ENCODE measurements at regions of chr3 and their contacts with region 1.

Region 1: DNA sequence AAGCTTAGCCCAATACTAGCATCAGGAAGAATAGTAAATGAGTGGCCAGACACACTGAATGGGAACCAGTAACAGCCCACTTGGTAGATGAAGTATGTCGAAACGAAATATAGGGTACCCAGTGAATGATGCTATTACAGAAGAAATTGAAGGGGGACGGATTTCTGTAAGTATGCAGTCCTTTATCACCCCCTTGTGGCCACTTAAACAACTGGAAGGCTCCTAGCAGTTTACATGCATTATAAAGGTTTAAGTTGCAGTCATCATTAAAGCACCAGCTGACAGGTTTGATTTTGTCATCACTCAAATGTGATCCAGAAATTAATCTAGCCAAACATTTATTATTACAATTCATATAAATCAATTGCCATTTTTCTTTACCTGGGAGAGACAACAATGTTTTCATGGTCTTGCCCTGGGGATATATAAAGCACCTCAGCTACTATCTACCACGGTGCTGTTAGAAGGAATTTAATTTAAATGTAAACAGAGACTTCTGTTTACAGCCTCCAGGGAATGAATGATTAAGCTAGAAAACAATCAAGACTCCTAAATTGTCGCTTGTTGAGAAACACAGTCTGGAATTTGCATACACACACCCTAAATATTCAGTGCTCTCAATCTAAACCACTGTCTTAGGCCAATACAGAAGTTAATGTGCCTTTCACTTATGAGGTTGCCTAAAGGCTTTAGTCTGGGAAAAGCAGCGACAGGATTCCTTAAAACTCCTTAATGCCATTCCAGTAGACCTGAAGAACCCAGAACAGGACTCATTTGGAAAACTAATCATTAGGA is 7.8 kb downstream of the EIF1B start:
- DNase-seq: peak in 2 of 5 donors; percentile 19 to 30
- ATAC-seq: no peak
- H3K4me3 ChIP-seq: no peak overlapping the region
- H3K27ac ChIP-seq: no peak overlapping the region
- H3K4me1 ChIP-seq: peaks cover 0 to 27% (median 15%) of the 10 kb centered on the region in 12 donors
- H3K27me3 ChIP-seq: no peaks in the 10 kb centered on the region
- CTCF ChIP-seq: peak; percentile 67 to 89 (median 82)
- POLR2A ChIP-seq: no peak

Region 2: DNA sequence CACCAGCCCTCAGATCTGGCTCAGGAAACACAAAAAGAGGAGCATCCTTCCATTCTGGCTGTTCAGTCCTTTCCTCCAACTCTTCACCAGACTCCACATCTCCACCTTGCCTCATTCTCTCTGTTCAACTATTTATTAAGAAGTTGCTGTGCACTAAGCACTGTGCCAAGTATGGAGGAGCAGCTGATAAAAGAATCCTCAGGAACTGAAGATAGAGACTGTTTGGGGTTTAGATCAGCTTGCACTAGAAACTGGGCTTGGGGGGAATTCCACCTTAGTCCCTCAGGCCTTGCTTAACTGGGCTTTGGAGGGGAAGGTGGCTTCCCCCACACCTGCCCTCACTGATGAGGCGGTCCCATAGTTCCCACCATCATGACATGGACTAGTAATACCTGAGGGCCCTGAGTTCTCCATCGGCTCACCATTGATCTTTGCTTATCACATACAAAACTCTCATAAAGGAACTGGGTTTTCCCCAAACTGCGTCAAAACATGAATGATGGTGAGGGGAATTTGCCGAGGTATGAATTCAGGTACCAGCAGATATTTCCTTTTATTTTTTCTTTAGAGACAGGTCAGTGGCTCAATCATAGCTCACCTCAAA is 989.4 kb before region 1 on chr3:
- intact Hi-C with region 1: no loop called
- DNase-seq: no peak
- ATAC-seq: no peak
- H3K4me3 ChIP-seq: no peak overlapping the region
- H3K27ac ChIP-seq: no peak overlapping the region
- H3K4me1 ChIP-seq: no peaks in the 10 kb centered on the region
- H3K27me3 ChIP-seq: peaks cover 0 to 7% (median 0%) of the 10 kb centered on the region in 9 donors
- CTCF ChIP-seq: no peak
- POLR2A ChIP-seq: no peak

Region 3: DNA sequence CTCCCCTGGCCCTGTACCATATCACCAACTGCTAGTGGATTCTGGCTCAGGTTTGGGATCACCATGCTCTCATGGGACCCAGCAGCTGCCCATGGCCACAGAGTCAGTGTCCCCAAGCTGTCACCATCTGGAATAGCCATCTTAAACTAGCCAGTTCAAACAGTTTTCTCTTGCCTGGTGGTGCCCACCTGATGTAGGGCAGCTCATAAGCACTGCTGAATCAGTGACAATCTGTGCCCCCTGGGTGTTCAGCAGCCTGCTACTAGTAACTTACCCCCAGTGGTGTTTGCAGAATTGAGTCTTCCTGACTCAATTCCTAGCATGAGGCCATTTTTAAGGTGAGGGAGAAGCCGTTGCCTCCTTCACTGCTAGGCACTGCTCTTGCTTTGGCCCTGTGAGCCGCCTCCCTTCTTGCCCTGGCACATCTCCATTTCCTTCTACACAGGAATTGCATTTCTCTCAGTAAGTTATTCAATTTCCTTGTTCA is 902.8 kb before region 1 on chr3:
- intact Hi-C with region 1: loop called in 1 of 10 experiments (anchors 10 kb)
- DNase-seq: no peak
- ATAC-seq: peak; percentile 41 to 73 (median 66)
- H3K4me3 ChIP-seq: no peak overlapping the region
- H3K27ac ChIP-seq: peak overlapping the region in 2 of 12 donors; percentile 17 to 47
- H3K4me1 ChIP-seq: peaks cover 0 to 33% (median 11%) of the 10 kb centered on the region in 12 donors
- H3K27me3 ChIP-seq: no peaks in the 10 kb centered on the region
- CTCF ChIP-seq: no peak
- POLR2A ChIP-seq: no peak

Region 4: DNA sequence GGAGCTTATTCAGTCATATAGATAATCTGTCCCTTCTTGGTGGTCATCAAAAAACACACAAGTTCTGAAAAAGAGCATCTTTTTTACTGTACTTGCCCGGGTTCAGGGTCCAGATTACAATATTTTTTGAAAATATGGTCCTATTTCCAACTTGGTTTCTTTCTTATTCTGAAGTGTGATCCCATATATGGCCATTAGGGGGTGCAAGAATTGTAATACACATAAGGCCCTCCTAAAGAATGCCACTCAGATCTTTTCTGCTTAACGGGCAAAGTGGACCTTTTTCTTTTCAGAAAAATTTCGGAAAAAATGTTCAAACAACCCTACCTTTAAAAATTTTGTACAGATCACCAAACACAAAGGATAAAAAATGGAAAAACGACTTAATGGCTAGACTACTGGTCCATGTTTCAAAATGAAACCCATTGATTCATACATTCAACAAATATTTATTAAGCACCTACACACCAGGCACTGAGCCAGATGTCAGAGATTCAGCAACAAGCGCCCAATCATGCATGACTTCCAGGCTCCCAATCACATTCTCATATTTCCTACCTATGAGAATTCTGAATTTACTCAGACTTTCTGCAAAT is 609.8 kb before region 1 on chr3:
- intact Hi-C with region 1: loop called in 3 of 10 experiments (anchors 5 to 10 kb)
- DNase-seq: no peak
- ATAC-seq: no peak
- H3K4me3 ChIP-seq: no peak overlapping the region
- H3K27ac ChIP-seq: no peak overlapping the region
- H3K4me1 ChIP-seq: no peaks in the 10 kb centered on the region
- H3K27me3 ChIP-seq: no peaks in the 10 kb centered on the region
- CTCF ChIP-seq: peak; percentile 48 to 76 (median 72)
- POLR2A ChIP-seq: no peak

Region 5: DNA sequence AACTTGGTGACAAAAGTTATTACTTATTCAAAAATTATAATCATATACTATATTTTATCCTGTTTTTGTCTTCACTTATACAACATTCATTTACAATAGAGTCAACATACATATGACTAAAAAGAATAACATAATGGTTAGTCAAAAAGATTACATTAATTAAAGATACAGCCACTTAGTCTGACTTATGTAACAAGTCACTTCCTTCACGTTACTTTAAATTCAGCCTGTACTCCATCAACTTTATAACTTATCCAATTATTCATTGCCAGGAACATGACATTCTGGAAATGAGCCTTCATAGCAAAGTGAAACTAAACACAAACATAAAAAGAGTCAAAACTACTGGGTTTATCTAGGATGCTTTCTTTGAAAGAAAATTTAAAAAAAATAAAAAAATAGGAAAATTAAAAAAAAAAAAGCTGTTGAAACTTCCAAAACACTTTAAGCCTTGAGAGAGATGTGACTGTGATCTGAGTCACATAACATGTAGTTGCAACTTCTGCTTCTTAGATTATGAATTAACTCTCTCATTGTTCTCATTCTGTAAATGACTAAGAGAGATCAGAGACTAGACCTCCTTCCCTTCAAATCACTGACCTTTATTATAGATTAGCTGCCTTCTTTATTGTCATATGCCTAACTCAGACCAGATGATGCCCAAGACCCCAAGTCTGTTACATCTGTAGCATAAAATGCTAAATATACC is 400.0 kb before region 1 on chr3:
- intact Hi-C with region 1: no loop called
- DNase-seq: no peak
- ATAC-seq: no peak
- H3K4me3 ChIP-seq: no peak overlapping the region
- H3K27ac ChIP-seq: no peak overlapping the region
- H3K4me1 ChIP-seq: peaks cover 0 to 2% (median 0%) of the 10 kb centered on the region in 12 donors
- H3K27me3 ChIP-seq: no peaks in the 10 kb centered on the region
- CTCF ChIP-seq: no peak
- POLR2A ChIP-seq: no peak

Region 6: DNA sequence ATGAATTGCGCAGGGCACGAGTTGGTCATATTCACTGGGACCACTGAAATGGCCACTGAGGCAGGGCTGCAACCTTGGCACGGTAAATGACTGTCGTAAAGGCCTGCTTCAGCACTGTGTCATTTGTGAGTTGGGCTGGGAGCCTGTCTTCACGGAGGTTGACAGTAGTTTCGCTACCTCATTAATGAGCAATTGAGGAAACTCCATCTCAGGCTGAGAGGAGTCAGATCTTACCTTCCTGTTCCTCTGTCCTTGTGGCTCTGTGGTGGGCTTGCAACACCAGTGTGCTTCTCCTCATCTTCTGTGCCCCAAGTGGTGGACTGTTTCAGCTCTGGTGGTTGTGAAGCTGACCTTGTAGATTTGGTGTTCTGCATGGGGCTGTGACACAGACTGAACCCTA is 87.9 kb before region 1 on chr3:
- intact Hi-C with region 1: no loop called
- DNase-seq: no peak
- ATAC-seq: peak in 1 of 4 donors; percentile 28
- H3K4me3 ChIP-seq: no peak overlapping the region
- H3K27ac ChIP-seq: peak overlapping the region in 1 of 12 donors; percentile 32
- H3K4me1 ChIP-seq: peaks cover 0 to 9% (median 0%) of the 10 kb centered on the region in 12 donors
- H3K27me3 ChIP-seq: no peaks in the 10 kb centered on the region
- CTCF ChIP-seq: no peak
- POLR2A ChIP-seq: no peak

Region 7: GRCh38 chr3:40267937-40268723 is 49.1 kb before region 1 on chr3:
- intact Hi-C with region 1: no loop called
- DNase-seq: no peak
- ATAC-seq: peak in 3 of 4 donors; percentile 58 to 75 (median 72)
- H3K4me3 ChIP-seq: no peak overlapping the region
- H3K27ac ChIP-seq: no peak overlapping the region
- H3K4me1 ChIP-seq: peaks cover 0 to 15% (median 1%) of the 10 kb centered on the region in 12 donors
- H3K27me3 ChIP-seq: no peaks in the 10 kb centered on the region
- CTCF ChIP-seq: no peak
- POLR2A ChIP-seq: no peak

Region 8: DNA sequence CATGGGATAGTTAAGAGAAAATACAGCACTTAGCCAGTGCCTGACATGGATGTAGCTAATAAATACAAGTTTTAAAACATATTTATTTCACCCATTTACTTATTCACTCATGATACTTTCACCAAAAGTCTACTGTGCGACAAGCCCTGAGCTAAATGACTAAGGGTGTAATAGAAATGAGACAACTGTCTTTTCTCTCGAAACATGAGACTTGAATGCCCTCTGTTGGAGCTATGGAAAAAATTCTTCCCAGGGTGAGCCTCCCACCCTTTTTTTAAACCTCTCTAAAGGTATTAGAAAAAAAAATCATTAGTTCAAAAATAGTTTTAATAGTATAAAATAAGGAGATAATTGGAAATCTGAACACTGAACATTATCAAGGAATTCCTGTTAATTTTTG is 115.5 kb after region 1 on chr3:
- intact Hi-C with region 1: loop called in 1 of 10 experiments (anchors 10 kb)
- DNase-seq: no peak
- ATAC-seq: no peak
- H3K4me3 ChIP-seq: no peak overlapping the region
- H3K27ac ChIP-seq: no peak overlapping the region
- H3K4me1 ChIP-seq: no peaks in the 10 kb centered on the region
- H3K27me3 ChIP-seq: no peaks in the 10 kb centered on the region
- CTCF ChIP-seq: peak in 3 of 12 donors; percentile 9 to 21 (median 18)
- POLR2A ChIP-seq: no peak

Region 9: GRCh38 chr3:40524568-40525285 is 207.5 kb after region 1 on chr3 and contains the start of gene ZNF621:
- intact Hi-C with region 1: loop called in 1 of 10 experiments (anchors 10 kb)
- DNase-seq: peak; percentile 93 to 96 (median 94)
- ATAC-seq: peak; percentile 96 to 100 (median 100)
- H3K4me3 ChIP-seq: peak within 1 kb of the TSS; percentile 54 to 95 (median 84)
- H3K27ac ChIP-seq: peak within 1 kb of the TSS; percentile 70 to 94 (median 86)
- H3K4me1 ChIP-seq: peaks cover 0 to 19% (median 13%) of the 10 kb centered on the region in 12 donors
- H3K27me3 ChIP-seq: no peaks in the 10 kb centered on the region
- CTCF ChIP-seq: peak in 1 of 12 donors; percentile 15
- POLR2A ChIP-seq: peak in 1 of 2 donors; percentile 87
- total RNA-seq, gene ZNF621: 7.6 to 14.3 (median 9.7) TPM

Measured in heart left ventricle (tissue), 16 donors.